ENCODE measurements at regions of chr3 and their contacts with region 1.

Region 1: GRCh38 chr3:69013253-69014021 is at the start of gene EOGT:
- DNase-seq: peak; percentile 90
- CTCF ChIP-seq: peak; percentile 76

Region 2: GRCh38 chr3:68985146-68985790 is 28.2 kb before region 1 on chr3:
- CTCF ChIA-PET with region 1: no interaction called
- POLR2A ChIA-PET with region 1: no interaction called
- DNase-seq: no peak
- CTCF ChIP-seq: no peak

Region 3: GRCh38 chr3:68996356-68996995 is 17.0 kb before region 1 on chr3:
- CTCF ChIA-PET with region 1: interaction called, 10 read pairs
- POLR2A ChIA-PET with region 1: interaction called, 4 read pairs
- DNase-seq: no peak
- CTCF ChIP-seq: no peak

Region 4: DNA sequence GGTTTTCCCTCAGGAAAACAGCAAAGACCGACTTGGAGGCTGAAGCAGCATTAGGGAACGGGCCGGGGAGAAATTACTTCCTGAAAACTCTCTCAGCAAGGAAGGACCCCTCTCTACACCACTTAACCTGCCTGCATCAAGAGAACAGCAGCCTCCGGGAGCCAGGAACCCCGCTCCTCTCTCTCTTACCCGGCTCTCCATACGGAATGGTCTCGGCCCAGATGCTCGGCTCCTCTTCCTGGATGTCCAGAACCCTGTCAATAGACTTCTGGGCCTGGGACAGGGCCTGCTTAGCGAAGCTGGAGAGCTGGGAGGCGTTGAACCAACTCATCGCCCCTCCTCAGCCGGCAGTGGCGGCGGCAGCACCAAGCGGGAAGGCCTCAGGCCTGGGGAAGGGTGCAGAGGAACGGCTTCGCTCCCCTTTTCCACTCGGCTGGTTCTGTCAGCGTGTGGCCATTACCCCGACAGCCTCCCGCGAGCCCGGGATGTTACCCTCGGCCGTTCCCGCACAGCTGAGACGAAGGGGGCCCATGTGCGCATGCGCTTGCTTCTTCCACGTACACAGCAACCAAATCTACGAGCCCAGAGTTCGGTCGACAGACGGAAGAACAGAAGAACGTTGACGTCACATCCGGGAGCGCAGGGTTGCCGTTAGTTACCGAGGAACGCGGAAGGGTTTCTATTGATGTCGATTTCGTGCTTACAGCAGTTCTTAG is 38.5 kb after region 1 on chr3 and contains the start of gene TMF1:
- CTCF ChIA-PET with region 1: interaction called, 21 read pairs
- POLR2A ChIA-PET with region 1: interaction called, 3 read pairs
- DNase-seq: peak; percentile 94
- CTCF ChIP-seq: no peak